Dorsolateral prefrontal cortex (tissue), 120 donors: ENCODE measurements at regions of chr3 and their contacts with region 1.

Region 1: DNA sequence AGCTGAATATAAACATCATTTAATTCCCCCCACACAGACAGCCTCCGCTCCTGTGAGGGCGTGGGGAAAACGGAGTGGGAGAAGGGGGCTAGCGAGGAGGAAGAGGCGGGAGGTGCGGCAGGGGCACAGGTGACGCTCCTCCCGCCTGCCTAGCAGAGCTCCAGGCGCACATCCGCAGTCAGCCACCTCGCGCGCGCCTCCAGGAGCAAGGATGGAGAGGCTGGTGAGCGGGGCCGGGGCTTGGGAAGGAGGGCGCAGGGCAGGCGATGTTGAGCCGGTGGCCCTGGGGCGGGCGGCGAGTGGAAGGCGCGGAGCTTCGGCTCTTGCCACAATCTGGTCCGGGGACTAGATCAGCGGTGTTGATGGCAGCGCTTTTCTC is at the start of gene CD200:
- DNase-seq: peak; percentile 53 to 87 (median 74)
- H3K4me3 ChIP-seq: peak within 1 kb of the TSS; percentile 54 to 95 (median 77)
- H3K27ac ChIP-seq: peak within 1 kb of the TSS; percentile 83 to 100 (median 98)
- H3K27me3 ChIP-seq: no peaks in the 10 kb centered on the region
- CTCF ChIP-seq: peak in 13 of 56 donors; percentile 1 to 44 (median 21)
- total RNA-seq, gene CD200: 27.6 to 121 (median 80.1) TPM

Region 2: DNA sequence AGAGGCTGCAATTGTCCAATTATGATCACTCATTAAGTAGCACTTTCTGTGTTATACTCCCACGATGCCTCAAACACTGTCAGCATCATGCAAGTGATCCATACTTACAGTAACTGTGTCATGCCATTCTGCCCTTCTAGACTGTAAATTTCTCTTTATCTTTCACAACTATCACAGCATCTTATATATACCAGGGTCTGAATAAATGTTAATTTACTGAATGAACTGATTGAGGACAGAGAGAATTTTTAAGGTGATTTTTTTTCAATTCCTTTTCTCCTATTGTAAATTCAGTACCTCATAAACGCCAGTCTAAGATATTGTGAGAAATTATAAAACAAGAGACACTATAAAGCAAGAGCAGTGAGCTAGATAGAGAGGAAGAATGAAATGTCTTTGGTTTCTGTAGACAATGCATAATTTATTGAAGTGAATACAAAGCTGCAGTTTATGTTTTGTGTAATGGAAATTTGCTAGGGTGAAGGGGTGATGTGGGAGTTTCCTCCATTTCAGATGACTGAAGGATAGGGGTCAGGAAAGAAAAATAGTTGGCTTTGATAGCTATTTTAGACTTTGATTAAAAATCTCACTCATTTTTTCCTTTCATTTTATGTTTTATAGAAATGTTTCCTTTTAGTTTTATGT is 17.3 kb after region 1 on chr3:
- intact Hi-C with region 1: loop called in 1 of 2 experiments (anchors 1 kb)
- DNase-seq: no peak
- H3K4me3 ChIP-seq: peak overlapping the region in 10 of 59 donors; percentile 4 to 25 (median 14)
- H3K27ac ChIP-seq: peak overlapping the region in 50 of 59 donors; percentile 3 to 85 (median 54)
- H3K27me3 ChIP-seq: no peaks in the 10 kb centered on the region
- CTCF ChIP-seq: no peak

Region 3: GRCh38 chr3:112390783-112391641 is 58.0 kb after region 1 on chr3:
- intact Hi-C with region 1: loop called (anchors 2 kb)
- DNase-seq: peak in 4 of 10 donors; percentile 8 to 53 (median 40)
- H3K4me3 ChIP-seq: peak overlapping the region in 35 of 59 donors; percentile 1 to 50 (median 22)
- H3K27ac ChIP-seq: peak overlapping the region; percentile 87 to 99 (median 97)
- H3K27me3 ChIP-seq: no peaks in the 10 kb centered on the region
- CTCF ChIP-seq: peak in 10 of 56 donors; percentile 3 to 33 (median 10)

Region 4: DNA sequence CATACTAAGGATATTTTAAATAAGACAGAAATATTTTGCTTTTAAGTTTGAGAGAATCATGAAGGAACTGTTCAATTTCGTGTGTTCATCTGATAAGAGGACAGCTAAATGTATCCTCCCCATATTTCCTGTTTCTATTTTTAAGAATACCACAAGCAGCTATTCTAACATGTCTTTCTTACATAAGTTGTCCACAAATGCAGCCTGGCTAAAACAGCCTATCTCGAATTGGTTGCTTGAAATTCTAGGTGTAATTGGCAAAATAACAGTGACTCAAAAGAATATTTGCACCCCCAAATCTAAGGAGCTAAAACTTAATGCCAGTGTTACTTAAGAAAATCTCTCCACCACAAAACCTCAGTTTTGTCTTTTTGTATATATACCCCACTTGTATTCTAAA is 131.3 kb after region 1 on chr3:
- intact Hi-C with region 1: no loop called
- DNase-seq: no peak
- H3K4me3 ChIP-seq: no peak overlapping the region
- H3K27ac ChIP-seq: no peak overlapping the region
- H3K27me3 ChIP-seq: no peaks in the 10 kb centered on the region
- CTCF ChIP-seq: no peak